ENCODE measurements at regions of chr21 and their contacts with region 1.

Region 1: GRCh38 chr21:18138507-18138906 is 106.1 kb upstream of the CHODL start:
- DNase-seq: no peak
- ATAC-seq: no peak
- H3K4me3 ChIP-seq: no peak overlapping the region
- H3K27ac ChIP-seq: no peak overlapping the region
- H3K4me1 ChIP-seq: no peaks in the 10 kb centered on the region
- H3K27me3 ChIP-seq: no peaks in the 10 kb centered on the region
- CTCF ChIP-seq: no peak

Region 2: DNA sequence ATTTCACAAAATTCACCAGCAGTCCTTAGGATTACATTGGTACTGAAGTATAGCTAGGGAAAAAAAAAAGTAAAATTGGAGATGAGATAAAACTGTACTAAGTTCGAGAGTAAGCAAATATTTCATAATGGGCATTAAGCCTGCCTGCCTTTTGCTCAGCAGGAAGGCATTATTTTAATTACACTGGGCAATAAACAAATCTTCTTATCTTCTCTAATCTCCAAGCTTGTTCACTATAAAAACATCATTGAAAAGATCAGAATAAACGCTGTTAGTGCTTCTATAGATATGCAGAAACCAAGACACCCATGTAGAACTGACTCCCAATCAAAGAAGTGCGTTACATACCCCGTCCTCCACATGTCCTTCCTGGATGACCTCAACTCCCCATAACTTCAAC is 68.1 kb before region 1 on chr21:
- intact Hi-C with region 1: loop called in 1 of 10 experiments (anchors 10 kb)
- DNase-seq: no peak
- ATAC-seq: no peak
- H3K4me3 ChIP-seq: no peak overlapping the region
- H3K27ac ChIP-seq: no peak overlapping the region
- H3K4me1 ChIP-seq: no peaks in the 10 kb centered on the region
- H3K27me3 ChIP-seq: no peaks in the 10 kb centered on the region
- CTCF ChIP-seq: no peak